AG04450 (cell line): ENCODE measurements at regions of chr7 and their contacts with region 1.

Region 1: GRCh38 chr7:66628361-66629140 is at the start of gene KCTD7:
- DNase-seq: peak; percentile 96
- H3K4me3 ChIP-seq: peak within 1 kb of the TSS; percentile 89
- H3K27ac ChIP-seq: peak within 1 kb of the TSS; percentile 95
- H3K27me3 ChIP-seq: no peaks in the 10 kb centered on the region
- CTCF ChIP-seq: no peak
- polyA plus RNA-seq, gene KCTD7: 14.7 and 14.8 TPM in 2 replicates

Region 2: GRCh38 chr7:66654123-66654732 is 25.7 kb after region 1 on chr7:
- CTCF ChIA-PET with region 1: no interaction called
- POLR2A ChIA-PET with region 1: interaction called, 17 read pairs
- DNase-seq: peak; percentile 94
- H3K4me3 ChIP-seq: peak overlapping the region; percentile 87
- H3K27ac ChIP-seq: peak overlapping the region; percentile 99
- H3K27me3 ChIP-seq: no peaks in the 10 kb centered on the region
- CTCF ChIP-seq: peak; percentile 27